ENCODE measurements at regions of chr7 and their contacts with region 1.

Region 1: GRCh38 chr7:97043281-97043680 is 18.6 kb upstream of the DLX5 start:
- DNase-seq: peak; percentile 7
- ATAC-seq: no peak
- H3K4me3 ChIP-seq: no peak overlapping the region
- H3K27ac ChIP-seq: no peak overlapping the region
- H3K4me1 ChIP-seq: no peaks in the 10 kb centered on the region
- H3K27me3 ChIP-seq: no peaks in the 10 kb centered on the region
- CTCF ChIP-seq: no peak
- POLR2A ChIP-seq: no peak
- RAD21 ChIP-seq: no peak

Region 2: GRCh38 chr7:96778263-96778662 is 265.0 kb before region 1 on chr7:
- CTCF ChIA-PET with region 1: no interaction called
- POLR2A ChIA-PET with region 1: interaction called, 12 read pairs
- dilution Hi-C with region 1: no loop called
- in situ Hi-C with region 1: no loop called
- intact Hi-C with region 1: no loop called
- DNase-seq: no peak
- ATAC-seq: no peak
- H3K4me3 ChIP-seq: no peak overlapping the region
- H3K27ac ChIP-seq: no peak overlapping the region
- H3K4me1 ChIP-seq: no peaks in the 10 kb centered on the region
- H3K27me3 ChIP-seq: no peaks in the 10 kb centered on the region
- CTCF ChIP-seq: no peak
- POLR2A ChIP-seq: no peak
- RAD21 ChIP-seq: no peak

Region 3: GRCh38 chr7:96949766-96950165 is 93.5 kb before region 1 on chr7:
- CTCF ChIA-PET with region 1: no interaction called
- POLR2A ChIA-PET with region 1: no interaction called
- dilution Hi-C with region 1: no loop called
- in situ Hi-C with region 1: no loop called
- intact Hi-C with region 1: no loop called
- DNase-seq: no peak
- ATAC-seq: no peak
- H3K4me3 ChIP-seq: no peak overlapping the region
- H3K27ac ChIP-seq: no peak overlapping the region
- H3K4me1 ChIP-seq: no peaks in the 10 kb centered on the region
- H3K27me3 ChIP-seq: no peaks in the 10 kb centered on the region
- CTCF ChIP-seq: no peak
- POLR2A ChIP-seq: no peak
- RAD21 ChIP-seq: no peak

Measured in IMR-90 (cell line).